GM13977 (cell line): ENCODE measurements at regions of chr6 and their contacts with region 1.

Region 1: GRCh38 chr6:151323791-151324487 is 67.4 kb downstream of the ZBTB2 start:
- DNase-seq: peak; percentile 79
- CTCF ChIP-seq: peak; percentile 96

Region 2: DNA sequence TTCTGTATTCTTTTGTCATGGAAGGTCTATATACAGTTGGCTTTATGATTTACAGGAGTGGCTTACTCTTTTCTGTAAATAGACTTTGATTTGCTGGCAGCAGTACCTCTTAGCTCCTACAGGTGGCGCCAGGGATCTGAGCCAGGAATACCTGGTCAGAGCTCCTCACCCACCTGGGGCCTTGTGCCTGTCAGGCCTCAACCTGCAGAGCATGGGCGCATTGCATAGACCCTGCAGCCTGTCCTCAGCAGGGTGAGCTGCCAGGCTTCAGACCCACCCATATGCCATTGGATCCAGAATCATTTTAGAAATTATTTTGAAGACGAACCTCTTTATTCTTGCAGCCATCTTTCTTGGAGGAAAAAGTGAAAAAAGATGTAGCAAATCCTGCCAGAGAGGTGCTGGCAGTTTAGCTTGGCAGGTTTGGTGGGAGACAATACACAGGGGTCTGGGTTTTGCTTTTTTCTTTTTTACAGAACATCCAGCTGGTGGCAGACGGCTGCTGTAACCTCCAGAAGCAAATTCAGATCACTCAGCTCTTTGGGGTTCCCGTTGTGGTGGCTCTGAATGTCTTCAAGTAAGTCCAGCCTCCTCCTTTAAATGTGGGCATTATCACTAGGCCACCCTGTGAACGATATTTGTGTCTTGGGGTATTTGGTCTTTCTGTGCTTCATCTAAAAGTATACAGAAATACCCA is 309.4 kb before region 1 on chr6:
- in situ Hi-C with region 1: loop called (anchors 10 kb)
- DNase-seq: peak; percentile 55
- CTCF ChIP-seq: peak; percentile 93